PC-9 (cell line): ENCODE measurements at regions of chr13 and their contacts with region 1.

Region 1: GRCh38 chr13:70585109-70585508 is 476.9 kb upstream of the KLHL1 start:
- DNase-seq: no peak
- H3K4me3 ChIP-seq: no peak overlapping the region
- H3K27ac ChIP-seq: no peak overlapping the region
- H3K4me1 ChIP-seq: no peaks in the 10 kb centered on the region
- H3K27me3 ChIP-seq: no peaks in the 10 kb centered on the region
- CTCF ChIP-seq: no peak

Region 2: GRCh38 chr13:70923863-70924752 is 339.0 kb after region 1 on chr13:
- CTCF ChIA-PET with region 1: no interaction called
- POLR2A ChIA-PET with region 1: no interaction called
- intact Hi-C with region 1: no loop called
- DNase-seq: no peak
- H3K4me3 ChIP-seq: no peak overlapping the region
- H3K27ac ChIP-seq: no peak overlapping the region
- H3K4me1 ChIP-seq: no peaks in the 10 kb centered on the region
- H3K27me3 ChIP-seq: no peaks in the 10 kb centered on the region
- CTCF ChIP-seq: no peak

Region 3: GRCh38 chr13:72539925-72540324 is 1954.8 kb after region 1 on chr13:
- CTCF ChIA-PET with region 1: no interaction called
- POLR2A ChIA-PET with region 1: interaction called, 14 read pairs
- intact Hi-C with region 1: no loop called
- DNase-seq: no peak
- H3K4me3 ChIP-seq: no peak overlapping the region
- H3K27ac ChIP-seq: no peak overlapping the region
- H3K4me1 ChIP-seq: no peaks in the 10 kb centered on the region
- H3K27me3 ChIP-seq: no peaks in the 10 kb centered on the region
- CTCF ChIP-seq: no peak